Common myeloid progenitor, CD34-positive (primary cell): ENCODE measurements at regions of chr14 and their contacts with region 1.

Region 1: DNA sequence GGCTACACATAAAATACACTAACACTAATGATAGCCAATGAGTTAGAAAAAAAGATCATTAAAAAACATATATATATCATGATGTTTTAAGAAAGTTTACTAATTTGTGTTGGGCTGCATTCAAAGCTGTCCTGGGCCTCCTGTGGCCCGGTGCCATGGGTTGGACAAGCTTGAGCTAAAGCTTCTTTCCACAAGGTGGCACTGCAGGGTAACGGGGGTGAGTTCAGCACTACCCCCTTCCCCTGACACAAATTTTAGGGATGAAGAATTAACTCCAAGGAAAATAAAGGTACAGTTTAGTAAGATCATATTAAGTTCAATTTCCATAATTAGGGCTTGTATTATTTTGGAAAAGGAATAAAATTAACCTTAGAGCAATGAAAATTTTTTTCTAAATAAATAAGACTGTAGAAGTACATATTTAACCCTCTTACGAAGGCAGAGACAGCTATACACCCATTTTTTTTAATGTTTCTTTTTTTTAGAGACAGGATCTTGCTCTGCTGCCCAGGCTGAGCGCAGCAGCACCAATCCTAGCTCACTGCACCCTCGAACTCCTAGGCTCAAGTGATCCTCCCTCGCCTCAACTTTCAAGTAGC is 38.9 kb downstream of the PPP1R13B start:
- DNase-seq: peak; percentile 69 to 79 (median 71)
- H3K4me3 ChIP-seq: no peak overlapping the region
- H3K27ac ChIP-seq: no peak overlapping the region
- H3K4me1 ChIP-seq: no peaks in the 10 kb centered on the region
- H3K27me3 ChIP-seq: peaks cover 0 to 6% (median 3%) of the 10 kb centered on the region in 5 experiments

Region 2: GRCh38 chr14:103763730-103764488 is 44.6 kb before region 1 on chr14:
- CTCF ChIA-PET with region 1: no interaction called
- POLR2A ChIA-PET with region 1: no interaction called
- DNase-seq: no peak
- H3K4me3 ChIP-seq: no peak overlapping the region
- H3K27ac ChIP-seq: no peak overlapping the region
- H3K4me1 ChIP-seq: no peaks in the 10 kb centered on the region
- H3K27me3 ChIP-seq: no peaks in the 10 kb centered on the region

Region 3: GRCh38 chr14:103819503-103820307 is 11.2 kb after region 1 on chr14:
- CTCF ChIA-PET with region 1: interaction called, 12 read pairs
- POLR2A ChIA-PET with region 1: no interaction called
- DNase-seq: no peak
- H3K4me3 ChIP-seq: no peak overlapping the region
- H3K27ac ChIP-seq: no peak overlapping the region
- H3K4me1 ChIP-seq: peaks cover 0 to 11% (median 2%) of the 10 kb centered on the region in 4 experiments
- H3K27me3 ChIP-seq: peaks cover 0 to 66% (median 23%) of the 10 kb centered on the region in 5 experiments

Region 4: DNA sequence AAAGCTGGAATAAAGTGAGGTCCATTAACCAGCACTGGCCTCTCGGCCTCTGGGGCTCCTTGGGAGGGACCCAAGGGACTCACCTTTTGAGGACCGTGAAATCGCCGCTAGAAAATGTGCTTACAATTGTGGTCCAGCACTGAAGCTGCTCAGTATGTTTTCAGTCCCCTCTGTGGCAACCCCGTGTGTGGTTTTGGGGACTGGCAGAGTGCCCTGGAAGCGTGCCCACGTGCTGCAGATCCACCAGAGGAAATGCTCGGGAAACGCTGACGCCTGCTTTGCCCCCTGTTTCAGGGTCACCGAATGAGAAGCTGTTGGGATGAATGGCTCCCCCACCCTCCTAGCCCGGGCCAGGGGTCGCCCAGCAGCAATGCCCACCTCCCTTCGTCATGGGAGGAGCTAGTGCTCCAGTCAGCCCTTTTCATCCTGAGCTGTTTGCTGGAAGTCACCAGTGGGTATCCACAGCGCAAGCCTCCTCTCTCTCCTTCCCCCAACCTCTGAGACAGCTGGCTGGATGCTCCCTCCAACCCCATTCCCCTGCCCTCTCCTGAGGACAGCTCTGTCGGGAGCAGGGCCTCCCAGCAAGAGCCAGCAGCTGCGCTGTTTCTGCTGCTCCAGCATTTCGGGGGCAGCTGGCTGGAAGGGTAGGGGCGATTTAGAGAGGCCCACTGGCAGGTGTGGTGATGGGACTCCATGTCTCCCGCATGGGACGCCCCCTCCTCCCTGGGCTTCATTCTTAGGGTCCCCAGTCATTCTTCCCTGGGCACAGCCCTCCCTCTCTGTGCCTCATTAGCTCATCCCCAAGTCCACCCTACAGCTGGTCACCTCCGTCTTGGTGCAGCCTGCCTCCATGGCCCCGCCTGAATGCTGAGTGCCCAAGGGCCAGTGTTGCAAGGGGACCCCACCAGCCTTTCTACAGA is 72.1 kb after region 1 on chr14:
- CTCF ChIA-PET with region 1: interaction called, 11 read pairs
- POLR2A ChIA-PET with region 1: no interaction called
- DNase-seq: peak; percentile 88 to 94 (median 93)
- H3K4me3 ChIP-seq: peak overlapping the region in 5 of 7 experiments; percentile 13 to 71 (median 51)
- H3K27ac ChIP-seq: no peak overlapping the region
- H3K4me1 ChIP-seq: peaks cover 0 to 29% (median 25%) of the 10 kb centered on the region in 4 experiments
- H3K27me3 ChIP-seq: peaks cover 0 to 19% (median 0%) of the 10 kb centered on the region in 5 experiments

Region 5: GRCh38 chr14:103899316-103899715 is 90.8 kb after region 1 on chr14:
- CTCF ChIA-PET with region 1: interaction called, 119 read pairs
- POLR2A ChIA-PET with region 1: no interaction called
- DNase-seq: peak in 2 of 3 donors; percentile 37 to 45
- H3K4me3 ChIP-seq: no peak overlapping the region
- H3K27ac ChIP-seq: no peak overlapping the region
- H3K4me1 ChIP-seq: peaks cover 0 to 2% (median under 1%) of the 10 kb centered on the region in 4 experiments
- H3K27me3 ChIP-seq: peaks cover 0 to 6% (median 0%) of the 10 kb centered on the region in 5 experiments

Region 6: DNA sequence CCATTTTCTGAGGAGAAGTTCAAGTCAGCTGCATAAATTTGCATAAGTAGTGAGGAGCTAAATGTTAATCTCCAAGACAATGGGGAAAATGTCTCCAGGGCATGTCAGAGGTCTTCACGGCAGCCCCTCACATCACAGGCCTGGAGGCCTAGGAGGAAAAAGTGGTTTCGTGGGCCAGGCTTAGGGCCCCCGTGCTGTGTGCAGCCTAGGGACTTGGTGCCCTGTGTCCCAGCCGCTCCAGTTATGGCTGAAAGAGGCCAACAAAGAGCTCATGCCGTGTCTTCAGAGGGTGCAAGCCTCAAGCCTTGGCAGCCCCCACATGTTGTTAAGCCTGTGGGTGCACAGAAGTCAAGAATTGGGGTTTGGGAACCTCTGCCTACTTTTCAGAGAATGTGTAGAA is 175.7 kb after region 1 on chr14:
- CTCF ChIA-PET with region 1: interaction called, 57 read pairs
- POLR2A ChIA-PET with region 1: no interaction called
- DNase-seq: no peak
- H3K4me3 ChIP-seq: no peak overlapping the region
- H3K27ac ChIP-seq: no peak overlapping the region
- H3K4me1 ChIP-seq: no peaks in the 10 kb centered on the region
- H3K27me3 ChIP-seq: peaks cover 0 to 3% (median 0%) of the 10 kb centered on the region in 5 experiments